ENCODE measurements at regions of chr17 and their contacts with region 1.

Region 1: DNA sequence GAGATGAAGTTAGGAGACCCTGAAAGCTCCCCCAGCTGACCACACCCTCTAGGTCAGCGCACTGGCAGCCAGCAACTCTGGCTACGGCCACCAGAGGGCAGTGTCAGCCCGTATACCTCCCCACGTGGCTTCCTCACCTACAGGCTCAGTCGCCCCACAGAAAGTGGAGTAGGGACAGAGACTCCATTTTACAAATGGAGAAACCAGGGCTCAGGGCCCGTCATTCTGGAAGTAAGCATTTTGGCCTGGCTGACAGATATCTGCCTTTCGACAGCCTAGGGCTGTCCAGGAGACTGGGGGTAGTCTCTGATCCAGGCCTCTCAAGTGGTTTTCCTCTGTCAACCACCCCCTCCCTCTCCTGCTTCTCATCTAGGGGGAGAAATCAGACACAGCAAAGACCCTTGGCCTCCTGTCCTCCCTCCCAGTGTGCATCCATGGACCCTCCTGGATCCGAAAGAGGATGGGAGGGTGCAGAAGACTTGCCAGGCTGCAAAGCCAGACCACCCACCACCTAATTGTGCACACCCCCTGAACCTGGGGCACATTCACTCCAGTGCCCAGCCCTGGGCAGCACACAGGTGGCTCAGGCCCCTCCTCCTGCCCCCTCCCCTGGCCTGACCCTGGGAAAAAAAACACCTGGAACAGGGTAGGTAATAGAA is 3.8 kb upstream of the HAP1 start:
- DNase-seq: peak; percentile 58 to 97 (median 83)

Region 2: DNA sequence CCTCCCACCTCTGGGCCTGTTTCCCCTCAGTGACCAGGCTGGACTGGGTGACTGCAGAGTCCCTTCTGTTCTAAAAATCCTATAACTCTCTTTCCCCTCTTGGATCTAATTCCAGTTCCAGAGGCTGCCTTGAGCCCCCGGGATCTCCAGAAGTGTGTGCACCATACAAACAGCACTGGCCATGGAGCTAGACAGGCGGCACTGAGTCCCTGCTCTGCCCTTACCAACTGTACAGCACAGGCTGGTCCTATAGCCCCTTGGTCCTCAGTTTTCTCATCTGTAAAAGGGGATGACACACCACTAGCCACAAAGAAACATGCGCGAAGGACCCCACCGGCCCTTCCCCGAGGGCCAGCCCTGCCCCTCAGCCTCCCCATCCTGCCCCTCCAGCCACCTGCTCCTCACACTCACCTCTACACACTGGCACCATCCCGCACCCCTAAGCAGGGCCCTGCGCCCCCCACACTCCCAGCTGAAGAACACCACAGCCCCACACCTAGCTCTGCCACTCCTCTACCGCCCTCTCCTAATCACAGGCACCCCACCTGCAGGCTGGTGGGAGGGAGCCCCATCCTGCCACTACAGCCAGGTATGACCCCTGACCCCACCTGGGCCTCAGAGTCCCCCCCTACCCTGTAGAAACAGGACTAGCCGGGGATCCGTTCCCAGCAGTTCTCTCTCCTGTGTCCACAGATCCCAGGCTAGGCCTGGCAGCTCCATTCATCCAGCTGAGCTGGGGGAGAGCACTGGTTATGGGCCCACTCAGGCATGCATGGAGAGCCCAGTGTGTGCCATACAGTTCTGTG is 124.7 kb before region 1 on chr17:
- intact Hi-C with region 1: no loop called
- DNase-seq: peak in 2 of 10 donors; percentile 44 to 61

Region 3: GRCh38 chr17:41801374-41802271 is 63.4 kb after region 1 on chr17:
- intact Hi-C with region 1: loop called (anchors 1 kb)
- DNase-seq: peak; percentile 57 to 97 (median 84)

Region 4: GRCh38 chr17:41885733-41886132 is 147.5 kb after region 1 on chr17:
- intact Hi-C with region 1: loop called (anchors 10 kb)
- DNase-seq: peak in 2 of 10 donors; percentile 24 to 55

Measured in posterior cingulate gyrus (tissue), 11 donors.